GM18951 (cell line): ENCODE measurements at regions of chr5 and their contacts with region 1.

Region 1: DNA sequence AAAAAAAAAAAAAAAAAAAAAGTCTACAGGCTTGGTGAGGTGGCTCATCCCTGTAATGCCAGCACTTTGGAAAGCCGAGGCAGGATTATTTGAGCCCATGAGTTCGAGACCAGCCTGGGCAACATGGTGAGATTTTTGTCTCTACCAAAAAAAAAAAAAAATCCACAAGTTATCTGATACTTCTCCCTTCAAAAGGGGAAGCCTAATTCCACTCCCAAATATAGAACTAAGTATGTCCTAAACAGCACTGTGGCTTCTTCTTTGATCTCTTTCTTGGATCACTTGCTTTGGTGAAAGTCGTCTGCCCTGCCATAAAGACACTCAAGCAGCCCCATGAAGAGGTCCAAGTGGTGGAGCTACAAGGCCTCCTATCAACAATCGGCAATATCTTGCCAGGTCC is 18.8 kb upstream of the STING1 start:
- POLR2A ChIP-seq: no peak

Region 2: GRCh38 chr5:137939331-137939730 is 1562.0 kb before region 1 on chr5:
- in situ Hi-C with region 1: no loop called
- POLR2A ChIP-seq: no peak

Region 3: DNA sequence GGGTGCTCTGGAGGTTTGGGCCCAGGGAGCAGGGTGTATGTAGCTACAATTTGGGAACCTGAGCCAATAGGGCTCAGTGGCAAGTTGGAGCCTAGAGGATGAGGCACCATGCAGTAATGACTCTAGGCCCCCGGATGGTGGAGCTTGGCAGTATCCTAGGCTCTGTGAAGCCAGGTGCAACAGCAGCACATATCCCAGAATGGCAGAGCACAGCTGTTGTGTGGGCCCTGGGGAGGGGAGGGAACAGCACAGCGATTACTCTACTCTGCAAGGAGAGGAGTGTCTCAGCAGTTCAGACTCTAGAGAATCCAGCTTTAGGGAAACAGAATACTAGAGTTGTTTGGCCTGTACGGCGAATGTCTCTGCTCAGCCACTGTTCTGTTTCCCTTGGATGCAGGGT is 682.3 kb before region 1 on chr5:
- in situ Hi-C with region 1: no loop called
- POLR2A ChIP-seq: no peak

Region 4: DNA sequence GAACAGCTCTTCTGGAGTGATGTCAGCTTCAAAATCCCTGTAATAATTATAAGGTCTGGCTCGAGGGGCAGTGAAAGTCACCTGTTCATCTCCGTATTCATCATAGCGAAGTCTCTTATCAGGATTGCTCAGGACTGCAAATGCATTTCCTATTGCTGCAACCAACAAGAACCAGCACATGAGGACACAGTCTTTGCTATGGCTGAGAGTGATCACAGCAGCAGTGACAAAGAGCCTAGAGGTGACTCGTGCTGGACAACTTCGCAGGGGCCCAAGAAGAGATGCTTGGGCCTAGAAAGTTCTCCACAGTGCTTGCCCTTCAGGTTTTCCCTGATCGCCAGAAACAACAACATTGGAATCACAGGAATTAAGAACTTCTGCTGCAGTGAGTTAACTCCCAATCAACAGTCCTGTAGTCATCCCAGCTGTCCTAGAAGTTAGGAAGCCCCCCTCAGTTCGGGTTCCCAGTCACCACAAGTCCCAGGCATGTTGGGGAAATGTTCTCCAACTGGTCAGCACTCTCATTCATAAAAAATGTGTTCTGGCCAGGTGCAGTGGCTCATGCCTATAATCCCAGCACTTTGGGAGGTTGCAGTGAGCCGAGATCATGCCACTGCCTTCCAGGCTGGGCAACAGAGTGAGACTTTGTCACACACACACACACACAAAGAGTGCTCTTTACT is 75.0 kb before region 1 on chr5:
- in situ Hi-C with region 1: loop called (anchors 5 kb)
- POLR2A ChIP-seq: no peak